RWPE1 (cell line): ENCODE measurements at regions of chr10 and their contacts with region 1.

Region 1: DNA sequence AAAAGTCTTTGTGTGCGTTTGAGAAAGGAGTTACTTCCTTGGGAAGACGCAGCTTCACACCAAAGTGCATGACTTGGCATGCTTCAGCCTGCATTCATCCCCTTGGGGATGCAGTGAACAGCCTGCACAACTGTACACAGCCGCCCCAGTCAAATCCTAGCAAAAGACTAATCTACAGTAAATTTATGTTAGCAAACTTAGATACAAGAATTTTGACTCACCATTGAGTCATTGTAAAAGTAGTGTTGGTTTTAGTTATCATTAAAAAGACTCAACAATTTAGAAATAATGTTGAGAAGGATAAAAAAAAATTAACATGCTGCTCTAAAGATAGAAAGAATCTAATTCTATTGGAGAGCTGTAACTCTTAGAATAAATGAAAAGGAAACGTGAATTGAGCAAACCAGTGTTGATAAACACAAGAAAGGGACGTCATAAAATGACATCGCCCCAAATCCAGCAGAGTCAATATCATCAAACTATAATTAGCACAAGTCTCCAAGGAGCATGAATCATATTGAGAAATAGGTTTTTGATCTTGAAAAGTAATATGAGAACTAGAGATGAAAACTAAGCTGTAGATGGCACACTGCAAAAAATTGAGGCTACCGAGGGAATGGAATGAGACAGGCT is 11.9 kb upstream of the OPTN start:
- DNase-seq: peak; percentile 58
- H3K27ac ChIP-seq: peak overlapping the region; percentile 29; the same call in 1 of the 2 replicates
- CTCF ChIP-seq: no peak

Region 2: DNA sequence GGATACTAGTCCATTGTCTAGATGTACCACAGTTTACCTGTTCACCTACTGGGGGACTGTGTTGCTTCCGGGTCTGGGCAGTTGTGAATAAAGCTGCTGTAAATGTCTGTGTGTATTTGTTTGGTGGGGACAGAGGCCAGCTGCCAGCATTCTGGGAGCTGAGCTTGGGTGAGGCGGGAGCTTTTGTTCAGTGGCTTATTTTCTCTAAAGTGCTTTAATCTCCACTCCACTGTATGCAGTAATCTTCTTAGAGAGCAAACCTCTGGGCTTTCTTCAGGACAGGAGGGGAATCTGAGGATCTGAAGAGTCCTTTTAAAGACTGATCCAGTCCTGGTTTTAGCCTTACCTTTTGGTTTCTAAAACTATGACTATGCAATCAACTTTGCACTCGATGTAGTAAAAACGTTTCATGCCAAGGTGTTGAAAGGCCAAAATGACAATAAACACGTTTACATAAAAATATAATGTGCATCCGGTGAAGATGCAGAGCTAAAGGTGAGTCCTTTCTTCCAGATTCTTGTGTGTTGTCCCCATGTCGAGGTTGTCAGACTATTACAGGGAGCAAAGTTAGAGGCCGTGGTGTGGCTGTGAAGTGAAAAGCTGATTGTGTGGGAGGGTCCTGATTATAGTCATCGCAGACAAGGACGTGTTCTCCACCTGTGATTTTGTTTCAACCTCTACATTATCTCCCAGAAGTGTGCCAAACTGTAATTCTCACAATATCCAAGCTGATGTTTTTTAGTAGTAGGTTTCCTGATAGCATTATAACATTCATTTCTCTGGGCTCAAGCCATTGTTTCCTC is 458.9 kb before region 1 on chr10:
- CTCF ChIA-PET with region 1: no interaction called
- POLR2A ChIA-PET with region 1: interaction called, 14 read pairs
- DNase-seq: no peak
- H3K27ac ChIP-seq: no peak overlapping the region
- CTCF ChIP-seq: no peak

Region 3: GRCh38 chr10:12726971-12727831 is 360.9 kb before region 1 on chr10:
- CTCF ChIA-PET with region 1: no interaction called
- POLR2A ChIA-PET with region 1: interaction called, 16 read pairs
- DNase-seq: no peak
- H3K27ac ChIP-seq: peak overlapping the region; percentile 13; the same call in 1 of the 2 replicates
- CTCF ChIP-seq: no peak

Region 4: DNA sequence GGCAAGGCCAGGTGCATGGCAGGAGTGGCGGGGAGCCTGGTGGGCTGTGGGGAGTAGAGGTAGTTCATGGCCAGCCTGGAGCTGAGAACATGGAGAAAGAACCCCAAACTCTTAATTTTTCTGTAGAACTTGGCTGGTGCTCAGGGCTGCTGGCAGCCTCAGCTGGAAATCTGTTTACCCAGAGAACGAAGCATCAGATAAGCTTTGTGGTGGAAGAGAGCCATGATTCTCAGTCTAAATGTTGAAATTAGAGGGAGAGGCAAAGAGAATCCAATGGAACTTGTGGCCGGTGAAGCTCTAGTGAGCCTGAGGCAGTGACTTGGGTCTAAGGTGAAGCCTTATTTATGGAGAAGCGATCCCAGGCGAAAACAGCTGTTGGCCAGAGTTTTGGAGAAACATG is 213.0 kb before region 1 on chr10:
- CTCF ChIA-PET with region 1: no interaction called
- POLR2A ChIA-PET with region 1: no interaction called
- DNase-seq: no peak
- H3K27ac ChIP-seq: no peak overlapping the region
- CTCF ChIP-seq: no peak

Region 5: GRCh38 chr10:13038391-13038790 is 49.7 kb before region 1 on chr10:
- CTCF ChIA-PET with region 1: no interaction called
- POLR2A ChIA-PET with region 1: no interaction called
- DNase-seq: no peak
- H3K27ac ChIP-seq: no peak overlapping the region
- CTCF ChIP-seq: no peak